H1 (cell line): ENCODE measurements at regions of chr2 and their contacts with region 1.

Region 1: GRCh38 chr2:233100192-233100998 is 40.3 kb downstream of the INPP5D start:
- DNase-seq: no peak
- H3K4me3 ChIP-seq: no peak overlapping the region
- H3K27ac ChIP-seq: no peak overlapping the region
- H3K4me1 ChIP-seq: no peaks in the 10 kb centered on the region
- H3K27me3 ChIP-seq: no peaks in the 10 kb centered on the region
- CTCF ChIP-seq: no peak
- EP300 ChIP-seq: no peak
- POLR2A ChIP-seq: no peak
- RAD21 ChIP-seq: no peak

Region 2: GRCh38 chr2:233021771-233022170 is 78.6 kb before region 1 on chr2:
- CTCF ChIA-PET with region 1: no interaction called
- POLR2A ChIA-PET with region 1: no interaction called
- DNase-seq: no peak
- H3K4me3 ChIP-seq: no peak overlapping the region
- H3K27ac ChIP-seq: no peak overlapping the region
- H3K4me1 ChIP-seq: no peaks in the 10 kb centered on the region
- H3K27me3 ChIP-seq: no peaks in the 10 kb centered on the region
- CTCF ChIP-seq: no peak
- EP300 ChIP-seq: no peak
- POLR2A ChIP-seq: no peak
- RAD21 ChIP-seq: no peak

Region 3: DNA sequence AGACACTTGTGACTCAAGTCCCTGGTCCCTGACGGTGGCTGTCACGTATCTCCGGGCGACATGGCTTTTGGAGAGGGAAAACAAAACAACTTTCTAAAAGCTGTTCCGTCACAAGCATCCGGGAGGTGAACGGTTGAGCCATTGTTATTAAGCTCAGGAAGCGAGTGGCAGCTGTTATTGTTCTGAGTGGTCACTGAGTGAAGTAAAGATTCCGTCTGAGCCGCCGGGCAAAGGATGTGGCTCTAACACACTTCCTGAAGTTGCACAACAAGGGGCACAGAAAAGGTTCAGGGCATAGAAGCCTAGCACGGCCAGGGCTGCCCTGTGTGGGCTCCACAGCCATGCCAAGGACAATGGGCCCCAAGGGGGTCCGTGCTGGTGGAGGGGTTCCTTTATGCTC is 15.9 kb before region 1 on chr2:
- CTCF ChIA-PET with region 1: interaction called, 12 read pairs
- POLR2A ChIA-PET with region 1: no interaction called
- DNase-seq: no peak
- H3K4me3 ChIP-seq: no peak overlapping the region
- H3K27ac ChIP-seq: no peak overlapping the region
- H3K4me1 ChIP-seq: peaks cover 0 to 5% (median 3%) of the 10 kb centered on the region in 4 experiments; a peak in 3 of 7 replicates
- H3K27me3 ChIP-seq: no peaks in the 10 kb centered on the region
- CTCF ChIP-seq: no peak
- EP300 ChIP-seq: no peak
- POLR2A ChIP-seq: no peak
- RAD21 ChIP-seq: no peak

Region 4: DNA sequence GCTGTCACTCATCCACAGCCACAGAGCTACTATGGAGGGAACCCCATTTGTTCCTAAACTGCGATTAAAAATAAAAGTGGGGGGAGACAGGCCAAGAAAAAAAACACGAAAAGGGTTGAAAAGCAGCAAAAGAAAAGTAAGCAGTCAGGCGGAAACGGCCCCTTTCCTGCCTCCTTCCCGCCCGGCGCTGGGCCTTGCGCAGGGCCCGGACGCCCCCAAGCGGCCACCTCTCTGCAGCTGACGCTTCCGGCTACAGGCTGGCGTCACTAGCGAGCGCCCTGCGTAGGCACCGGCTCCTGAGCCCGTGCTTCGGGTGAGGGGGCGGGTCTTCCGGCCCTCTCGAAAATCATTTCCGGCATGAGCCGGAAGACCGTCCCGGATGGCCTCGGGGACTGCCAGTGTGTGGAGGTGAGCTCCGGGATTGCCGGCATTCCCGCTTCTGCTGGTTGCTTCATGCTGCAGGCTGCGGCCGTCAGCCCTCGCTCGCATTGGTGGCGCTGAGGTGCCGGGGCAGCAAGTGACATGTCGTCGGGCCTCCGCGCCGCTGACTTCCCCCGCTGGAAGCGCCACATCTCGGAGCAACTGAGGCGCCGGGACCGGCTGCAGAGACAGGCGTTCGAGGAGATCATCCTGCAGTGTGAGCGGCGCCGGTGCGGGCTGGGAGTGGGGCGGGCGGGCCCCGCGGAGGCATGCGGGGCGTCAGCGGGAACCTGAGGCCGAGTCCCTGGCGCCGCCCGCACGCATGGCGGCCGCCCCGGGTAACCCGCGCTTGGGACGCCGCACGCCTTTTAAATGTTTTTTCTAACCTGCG is 151.1 kb after region 1 on chr2 and contains the start of gene ATG16L1:
- CTCF ChIA-PET with region 1: interaction called, 33 read pairs
- POLR2A ChIA-PET with region 1: no interaction called
- DNase-seq: peak; percentile 89 to 90
- H3K4me3 ChIP-seq: peak within 1 kb of the TSS; percentile 66 to 97 (median 86)
- H3K27ac ChIP-seq: peak within 1 kb of the TSS; percentile 76
- H3K4me1 ChIP-seq: 0 out of 7 replicates have a peak, but pooled peaks cover 0 to 2% (median 0%) of the 10 kb centered on the region in 4 experiments
- H3K27me3 ChIP-seq: peaks cover 0 to 1% (median 0%) of the 10 kb centered on the region in 4 experiments; a peak in 1 of 7 replicates
- CTCF ChIP-seq: peak; percentile 91 to 96 (median 94)
- EP300 ChIP-seq: peak in 1 of 2 experiments; percentile 80; a peak in 1 of 3 replicates
- POLR2A ChIP-seq: peak in 1 of 2 experiments; percentile 90; a peak in 2 of 3 replicates
- RAD21 ChIP-seq: peak; percentile 99
- total RNA-seq, gene ATG16L1: 28.5 and 31.0 TPM in 2 replicates